Lower leg skin (tissue), 4 donors: ENCODE measurements at regions of chr13 and their contacts with region 1.

Region 1: GRCh38 chr13:32586080-32586900 is at the start of gene PDS5B:
- DNase-seq: peak; percentile 92 to 98
- H3K4me3 ChIP-seq: peak within 1 kb of the TSS; percentile 69
- CTCF ChIP-seq: peak in 1 of 3 donors; percentile 11
- POLR2A ChIP-seq: no peak
- total RNA-seq, gene PDS5B: 18.5 to 25.4 (median 23.4) TPM

Region 2: GRCh38 chr13:30787738-30788525 is 1798.4 kb before region 1 on chr13:
- intact Hi-C with region 1: no loop called
- DNase-seq: no peak
- H3K4me3 ChIP-seq: no peak overlapping the region
- CTCF ChIP-seq: no peak
- POLR2A ChIP-seq: no peak

Region 3: GRCh38 chr13:33542283-33543088 is 956.2 kb after region 1 on chr13:
- intact Hi-C with region 1: loop called (anchors 5 kb)
- DNase-seq: peak; percentile 98 to 99
- H3K4me3 ChIP-seq: peak overlapping the region; percentile 26
- CTCF ChIP-seq: peak in 1 of 3 donors; percentile 87
- POLR2A ChIP-seq: peak in 1 of 2 donors; percentile 49